SK-N-SH (cell line): ENCODE measurements at regions of chr19 and their contacts with region 1.

Region 1: GRCh38 chr19:38666663-38667511 is 19.4 kb downstream of the ACTN4 start:
- DNase-seq: no peak
- H3K4me3 ChIP-seq: peak overlapping the region in 1 of 2 experiments; percentile 7; a peak in 1 of 4 replicates
- H3K27ac ChIP-seq: peak overlapping the region; percentile 81 to 86
- H3K4me1 ChIP-seq: peaks cover 43 to 72% of the 10 kb centered on the region in 2 experiments
- H3K27me3 ChIP-seq: no peaks in the 10 kb centered on the region
- CTCF ChIP-seq: no peak
- EP300 ChIP-seq: no peak
- RAD21 ChIP-seq: no peak

Region 2: GRCh38 chr19:38647368-38647965 is 19.4 kb before region 1 on chr19 and contains the start of gene ACTN4:
- CTCF ChIA-PET with region 1: interaction called, 3 read pairs
- POLR2A ChIA-PET with region 1: interaction called, 10 read pairs
- DNase-seq: peak; percentile 99
- H3K4me3 ChIP-seq: peak within 1 kb of the TSS; percentile 59 to 99
- H3K27ac ChIP-seq: peak within 1 kb of the TSS; percentile 71 to 99
- H3K4me1 ChIP-seq: peaks cover 22 to 26% of the 10 kb centered on the region in 2 experiments; a peak in 3 of 4 replicates
- H3K27me3 ChIP-seq: no peaks in the 10 kb centered on the region
- CTCF ChIP-seq: no peak
- EP300 ChIP-seq: no peak; a peak in 1 of 4 replicates
- RAD21 ChIP-seq: no peak; the same call in 1 of the 2 replicates
- polyA plus RNA-seq, gene ACTN4: 494 and 598 TPM in 2 replicates

Region 3: GRCh38 chr19:38701455-38702063 is 34.7 kb after region 1 on chr19:
- CTCF ChIA-PET with region 1: no interaction called
- POLR2A ChIA-PET with region 1: no interaction called
- DNase-seq: no peak
- H3K4me3 ChIP-seq: no peak overlapping the region
- H3K27ac ChIP-seq: no peak overlapping the region
- H3K4me1 ChIP-seq: peaks cover 0 to 25% of the 10 kb centered on the region in 2 experiments; a peak in 1 of 4 replicates
- H3K27me3 ChIP-seq: no peaks in the 10 kb centered on the region
- CTCF ChIP-seq: no peak
- EP300 ChIP-seq: no peak
- RAD21 ChIP-seq: no peak